HEK293 (cell line): ENCODE measurements at regions of chr9 and their contacts with region 1.

Region 1: GRCh38 chr9:16133556-16134227 is 580.8 kb downstream of the CCDC171 start:
- H3K4me3 ChIP-seq: no peak overlapping the region
- H3K27ac ChIP-seq: no peak overlapping the region
- H3K4me1 ChIP-seq: no peaks in the 10 kb centered on the region
- CTCF ChIP-seq: peak; percentile 40; the same call in 1 of the 2 replicates

Region 2: GRCh38 chr9:15873569-15874177 is 260.0 kb before region 1 on chr9:
- CTCF ChIA-PET with region 1: interaction called, 25 read pairs
- POLR2A ChIA-PET with region 1: no interaction called
- H3K4me3 ChIP-seq: no peak overlapping the region
- H3K27ac ChIP-seq: no peak overlapping the region
- H3K4me1 ChIP-seq: no peaks in the 10 kb centered on the region
- CTCF ChIP-seq: 0 out of 2 replicates have a peak, but pooled peaks have one; percentile 14

Region 3: DNA sequence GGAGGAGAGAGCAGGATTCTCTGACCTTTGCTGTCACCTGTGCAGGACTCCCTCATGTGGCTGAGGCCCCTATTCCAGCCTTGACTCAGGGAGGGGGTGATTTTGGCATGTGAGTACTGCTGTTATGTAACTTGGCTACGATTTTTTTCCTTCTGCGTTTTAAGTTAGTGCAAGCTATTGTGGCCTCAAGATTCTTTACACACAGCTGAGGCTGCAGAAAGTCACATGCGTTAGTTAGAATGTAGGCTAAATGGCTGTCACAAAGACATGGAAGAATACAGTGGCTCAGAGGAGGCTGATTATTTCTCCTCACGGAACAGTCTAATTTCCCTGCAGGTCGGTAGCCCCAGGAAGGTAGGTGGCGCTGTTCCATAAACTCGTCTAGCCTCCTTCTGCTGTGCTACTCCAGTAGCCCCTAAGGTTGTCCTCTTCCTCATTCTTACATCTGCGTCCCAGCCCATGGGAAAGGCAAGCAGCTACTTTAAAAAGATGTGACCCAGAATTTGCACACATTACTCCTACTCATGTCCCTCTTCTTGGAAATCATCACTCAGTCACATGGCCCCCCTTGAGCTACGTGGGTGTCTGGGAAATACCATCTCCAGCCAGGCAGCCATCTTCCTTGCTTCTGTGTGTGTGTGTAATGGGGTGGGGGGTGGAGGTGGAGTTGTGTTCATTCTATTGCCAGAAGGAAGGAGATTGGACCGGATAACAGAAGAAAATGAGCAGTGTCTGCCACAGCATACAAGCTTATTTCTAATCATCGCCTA is 94.3 kb before region 1 on chr9:
- CTCF ChIA-PET with region 1: interaction called, 12 read pairs
- POLR2A ChIA-PET with region 1: no interaction called
- H3K4me3 ChIP-seq: no peak overlapping the region
- H3K27ac ChIP-seq: no peak overlapping the region
- H3K4me1 ChIP-seq: no peaks in the 10 kb centered on the region
- CTCF ChIP-seq: no peak

Region 4: DNA sequence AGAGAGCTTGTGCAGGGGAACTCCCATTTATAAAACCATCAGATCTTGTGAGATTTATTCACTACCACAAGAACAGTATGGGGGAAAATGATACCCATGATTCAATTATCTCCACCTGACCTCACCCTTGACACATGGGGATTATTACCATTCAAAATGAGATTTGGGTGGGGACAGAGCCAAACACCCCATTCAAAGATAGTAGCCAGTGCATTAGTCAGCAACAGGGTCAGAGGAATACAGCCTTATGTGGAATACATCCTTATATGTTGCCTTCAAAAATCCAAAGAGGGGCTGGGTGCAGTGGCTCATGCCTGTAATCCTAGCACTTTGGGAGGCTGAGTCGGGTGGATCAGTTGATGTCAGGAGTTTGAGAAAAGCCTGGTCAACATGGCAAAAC is 17.7 kb before region 1 on chr9:
- CTCF ChIA-PET with region 1: interaction called, 10 read pairs
- POLR2A ChIA-PET with region 1: no interaction called
- H3K4me3 ChIP-seq: no peak overlapping the region
- H3K27ac ChIP-seq: no peak overlapping the region
- H3K4me1 ChIP-seq: no peaks in the 10 kb centered on the region
- CTCF ChIP-seq: no peak

Region 5: GRCh38 chr9:16143947-16144890 is 10.5 kb after region 1 on chr9:
- CTCF ChIA-PET with region 1: interaction called, 13 read pairs
- POLR2A ChIA-PET with region 1: no interaction called
- H3K4me3 ChIP-seq: no peak overlapping the region
- H3K27ac ChIP-seq: no peak overlapping the region
- H3K4me1 ChIP-seq: no peaks in the 10 kb centered on the region
- CTCF ChIP-seq: no peak

Region 6: GRCh38 chr9:16154521-16155078 is 20.9 kb after region 1 on chr9:
- CTCF ChIA-PET with region 1: interaction called, 22 read pairs
- POLR2A ChIA-PET with region 1: no interaction called
- H3K4me3 ChIP-seq: peak overlapping the region; percentile 20
- H3K27ac ChIP-seq: no peak overlapping the region
- H3K4me1 ChIP-seq: no peaks in the 10 kb centered on the region
- CTCF ChIP-seq: peak; percentile 58; the same call in 1 of the 2 replicates

Region 7: GRCh38 chr9:16192403-16193017 is 58.8 kb after region 1 on chr9:
- CTCF ChIA-PET with region 1: no interaction called
- POLR2A ChIA-PET with region 1: no interaction called
- H3K4me3 ChIP-seq: no peak overlapping the region; the same call in 1 of the 2 replicates
- H3K27ac ChIP-seq: no peak overlapping the region
- H3K4me1 ChIP-seq: no peaks in the 10 kb centered on the region
- CTCF ChIP-seq: no peak

Region 8: GRCh38 chr9:16321461-16322119 is 187.9 kb after region 1 on chr9:
- CTCF ChIA-PET with region 1: no interaction called
- POLR2A ChIA-PET with region 1: no interaction called
- H3K4me3 ChIP-seq: no peak overlapping the region
- H3K27ac ChIP-seq: no peak overlapping the region
- H3K4me1 ChIP-seq: no peaks in the 10 kb centered on the region
- CTCF ChIP-seq: no peak

Region 9: DNA sequence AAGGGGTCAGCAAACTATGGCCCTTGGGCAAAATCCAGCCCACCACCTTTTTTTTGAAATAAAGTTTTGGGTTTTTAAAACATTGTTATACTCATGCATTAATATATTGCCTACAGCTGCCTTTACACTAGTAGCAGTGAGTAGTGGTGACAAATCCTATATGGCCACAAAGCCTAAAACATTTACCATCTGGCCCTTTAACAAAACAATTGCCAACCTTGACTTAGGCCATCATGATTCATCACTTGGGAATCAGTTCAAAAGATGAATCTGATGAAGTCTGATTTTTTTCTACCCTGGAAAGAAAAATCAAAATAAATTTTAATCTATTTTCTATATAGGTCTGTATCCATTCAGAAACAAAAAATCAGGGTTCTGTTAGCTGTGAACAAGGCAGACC is 251.9 kb after region 1 on chr9:
- CTCF ChIA-PET with region 1: no interaction called
- POLR2A ChIA-PET with region 1: no interaction called
- H3K4me3 ChIP-seq: no peak overlapping the region
- H3K27ac ChIP-seq: no peak overlapping the region
- H3K4me1 ChIP-seq: no peaks in the 10 kb centered on the region
- CTCF ChIP-seq: no peak